ENCODE measurements at regions of chr10 and their contacts with region 1.

Region 1: DNA sequence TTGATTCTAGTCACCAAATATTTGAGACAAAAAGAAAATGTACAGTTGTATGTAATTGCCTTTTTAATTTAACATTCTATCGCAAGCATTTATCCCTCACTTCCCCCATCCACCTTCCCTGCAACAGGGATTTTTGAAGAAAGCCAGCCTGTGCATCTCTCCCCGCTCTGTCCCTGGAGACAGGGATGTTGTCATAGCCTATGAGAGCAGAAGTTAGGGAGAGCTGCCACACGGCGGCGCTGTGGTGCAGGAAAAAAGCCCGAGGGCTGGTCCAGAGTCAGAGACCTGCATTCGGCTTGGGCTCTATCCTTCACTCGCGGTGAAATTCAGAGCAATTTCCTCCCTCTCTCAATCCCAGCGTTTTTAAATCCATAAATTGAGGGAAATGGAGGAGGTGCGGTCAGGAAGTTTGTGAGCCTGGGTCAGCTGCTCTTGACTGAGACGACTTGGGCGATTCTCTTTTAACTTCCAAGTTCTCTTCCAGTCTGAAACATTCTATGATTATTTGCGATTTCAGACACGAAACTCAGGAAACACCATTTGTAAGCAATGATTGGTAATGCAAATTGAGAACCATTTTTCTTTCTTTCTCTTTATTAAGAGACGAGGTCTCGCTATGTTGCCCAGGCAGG is 17.5 kb downstream of the HKDC1 start:
- DNase-seq: peak; percentile 67 to 88 (median 79)
- ATAC-seq: peak; percentile 93
- H3K4me3 ChIP-seq: no peak overlapping the region
- H3K4me3 Mint-ChIP-seq: peak overlapping the region in 4 of 10 donors; percentile 9 to 36 (median 10)
- H3K27ac ChIP-seq: no peak overlapping the region
- H3K27ac Mint-ChIP-seq: peak overlapping the region in 6 of 9 donors; percentile 2 to 78 (median 20)
- H3K4me1 ChIP-seq: peaks cover 4 to 6% of the 10 kb centered on the region in 2 donors
- H3K4me1 Mint-ChIP-seq: peaks cover 8 to 37% (median 23%) of the 10 kb centered on the region in 7 donors
- H3K27me3 ChIP-seq: no peaks in the 10 kb centered on the region
- H3K27me3 Mint-ChIP-seq: no peaks in the 10 kb centered on the region

Region 2: GRCh38 chr10:69146759-69147158 is 90.9 kb before region 1 on chr10:
- CTCF ChIA-PET with region 1: no interaction called
- POLR2A ChIA-PET with region 1: no interaction called
- intact Hi-C with region 1: no loop called
- DNase-seq: peak in 2 of 9 donors; percentile 4 to 11
- ATAC-seq: no peak
- H3K4me3 ChIP-seq: no peak overlapping the region
- H3K4me3 Mint-ChIP-seq: peak overlapping the region in 1 of 10 donors; percentile 3
- H3K27ac ChIP-seq: no peak overlapping the region
- H3K27ac Mint-ChIP-seq: peak overlapping the region in 1 of 9 donors; percentile 5
- H3K4me1 ChIP-seq: peaks cover 0 to 7% of the 10 kb centered on the region in 2 donors
- H3K4me1 Mint-ChIP-seq: peaks cover 23 to 58% (median 54%) of the 10 kb centered on the region in 7 donors
- H3K27me3 ChIP-seq: no peaks in the 10 kb centered on the region
- H3K27me3 Mint-ChIP-seq: no peaks in the 10 kb centered on the region

Region 3: GRCh38 chr10:69344591-69345252 is 107.1 kb after region 1 on chr10:
- CTCF ChIA-PET with region 1: no interaction called
- POLR2A ChIA-PET with region 1: no interaction called
- intact Hi-C with region 1: no loop called
- DNase-seq: peak in 7 of 9 donors; percentile 30 to 45 (median 36)
- ATAC-seq: peak; percentile 78
- H3K4me3 ChIP-seq: no peak overlapping the region
- H3K4me3 Mint-ChIP-seq: peak overlapping the region; percentile 26 to 80 (median 77)
- H3K27ac ChIP-seq: peak overlapping the region; percentile 73
- H3K27ac Mint-ChIP-seq: peak overlapping the region; percentile 75 to 97 (median 94)
- H3K4me1 ChIP-seq: peaks cover 43 to 53% of the 10 kb centered on the region in 2 donors
- H3K4me1 Mint-ChIP-seq: peaks cover 69 to 94% (median 83%) of the 10 kb centered on the region in 7 donors
- H3K27me3 ChIP-seq: no peaks in the 10 kb centered on the region
- H3K27me3 Mint-ChIP-seq: no peaks in the 10 kb centered on the region

Region 4: DNA sequence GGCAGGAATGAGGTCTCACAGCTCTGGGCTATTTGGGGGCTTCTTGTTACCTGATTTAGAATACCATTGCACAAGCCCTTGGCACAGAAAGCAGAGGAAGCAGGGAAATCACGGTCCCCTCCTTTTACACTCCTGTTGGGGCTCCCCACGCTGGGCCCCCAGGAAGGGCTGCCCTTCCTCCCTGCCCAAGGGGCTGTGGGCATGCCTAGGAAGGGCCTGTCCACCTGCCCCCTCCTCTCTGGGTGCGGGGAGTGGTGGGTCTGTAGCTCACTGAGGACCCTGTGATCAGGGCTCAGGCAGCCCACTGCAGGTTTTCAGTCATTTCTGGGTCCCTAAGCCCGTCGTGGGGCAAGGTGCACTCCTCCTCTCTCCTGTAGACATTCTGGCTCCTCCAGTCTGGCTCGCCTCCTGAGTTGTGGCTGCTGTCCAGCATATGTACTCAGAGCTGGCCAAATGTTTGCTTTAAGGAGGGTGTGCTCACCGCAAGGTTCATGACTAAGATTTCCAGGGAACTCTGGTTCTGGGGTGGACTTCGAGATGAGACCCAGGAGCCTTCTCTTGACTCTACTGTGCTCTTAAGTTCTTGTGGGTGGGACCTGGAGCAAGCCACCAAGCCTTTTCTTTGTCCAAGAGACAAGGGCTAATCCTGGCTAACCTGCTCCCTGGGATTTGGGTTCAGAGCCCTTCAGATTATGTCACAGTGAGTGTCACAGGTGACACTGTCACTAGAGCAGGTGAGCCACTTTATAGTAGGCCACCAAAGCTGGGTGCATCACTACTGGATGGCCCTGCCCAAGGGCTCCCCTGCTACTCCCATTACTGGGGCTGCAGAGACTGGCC is 123.1 kb after region 1 on chr10:
- CTCF ChIA-PET with region 1: interaction called, 5 read pairs
- POLR2A ChIA-PET with region 1: interaction called, 4 read pairs
- intact Hi-C with region 1: loop called in 1 of 2 experiments (anchors 1 kb)
- DNase-seq: no peak
- ATAC-seq: no peak
- H3K4me3 ChIP-seq: no peak overlapping the region
- H3K4me3 Mint-ChIP-seq: peak overlapping the region in 9 of 10 donors; percentile 21 to 83 (median 73)
- H3K27ac ChIP-seq: peak overlapping the region; percentile 57
- H3K27ac Mint-ChIP-seq: peak overlapping the region; percentile 83 to 98 (median 94)
- H3K4me1 ChIP-seq: peaks cover 12 to 48% of the 10 kb centered on the region in 2 donors
- H3K4me1 Mint-ChIP-seq: peaks cover 44 to 77% (median 64%) of the 10 kb centered on the region in 7 donors
- H3K27me3 ChIP-seq: no peaks in the 10 kb centered on the region
- H3K27me3 Mint-ChIP-seq: no peaks in the 10 kb centered on the region

Region 5: DNA sequence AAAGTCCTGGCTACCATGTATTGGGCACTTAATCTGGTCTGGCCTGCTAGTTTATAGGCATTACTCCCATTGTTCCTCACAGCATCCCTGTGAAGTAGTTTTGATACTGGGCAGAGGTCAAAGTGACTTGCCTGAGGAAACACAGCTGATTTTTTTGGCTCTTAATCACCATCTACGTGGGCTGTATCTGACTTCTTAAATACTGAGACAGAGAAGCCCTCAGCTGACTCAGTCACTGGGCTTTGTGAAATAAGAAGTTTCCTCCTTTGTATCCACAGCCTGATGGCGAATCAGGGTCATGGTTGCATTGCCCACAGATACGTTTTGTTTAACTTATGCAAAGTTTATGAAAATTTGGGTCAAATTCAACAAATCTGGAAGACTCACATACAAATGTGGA is 165.9 kb after region 1 on chr10:
- CTCF ChIA-PET with region 1: interaction called, 12 read pairs
- POLR2A ChIA-PET with region 1: no interaction called
- intact Hi-C with region 1: loop called (anchors 1 kb)
- DNase-seq: no peak
- ATAC-seq: no peak
- H3K4me3 ChIP-seq: no peak overlapping the region
- H3K4me3 Mint-ChIP-seq: no peak overlapping the region
- H3K27ac ChIP-seq: no peak overlapping the region
- H3K27ac Mint-ChIP-seq: no peak overlapping the region
- H3K4me1 ChIP-seq: peaks cover 7 to 8% of the 10 kb centered on the region in 2 donors
- H3K4me1 Mint-ChIP-seq: peaks cover 7 to 12% (median 9%) of the 10 kb centered on the region in 7 donors
- H3K27me3 ChIP-seq: no peaks in the 10 kb centered on the region
- H3K27me3 Mint-ChIP-seq: no peaks in the 10 kb centered on the region

Measured in naive thymus-derived CD4-positive, alpha-beta T cell (primary cell).